Psoas muscle (tissue), 8 donors: ENCODE measurements at regions of chr1 and their contacts with region 1.

Region 1: DNA sequence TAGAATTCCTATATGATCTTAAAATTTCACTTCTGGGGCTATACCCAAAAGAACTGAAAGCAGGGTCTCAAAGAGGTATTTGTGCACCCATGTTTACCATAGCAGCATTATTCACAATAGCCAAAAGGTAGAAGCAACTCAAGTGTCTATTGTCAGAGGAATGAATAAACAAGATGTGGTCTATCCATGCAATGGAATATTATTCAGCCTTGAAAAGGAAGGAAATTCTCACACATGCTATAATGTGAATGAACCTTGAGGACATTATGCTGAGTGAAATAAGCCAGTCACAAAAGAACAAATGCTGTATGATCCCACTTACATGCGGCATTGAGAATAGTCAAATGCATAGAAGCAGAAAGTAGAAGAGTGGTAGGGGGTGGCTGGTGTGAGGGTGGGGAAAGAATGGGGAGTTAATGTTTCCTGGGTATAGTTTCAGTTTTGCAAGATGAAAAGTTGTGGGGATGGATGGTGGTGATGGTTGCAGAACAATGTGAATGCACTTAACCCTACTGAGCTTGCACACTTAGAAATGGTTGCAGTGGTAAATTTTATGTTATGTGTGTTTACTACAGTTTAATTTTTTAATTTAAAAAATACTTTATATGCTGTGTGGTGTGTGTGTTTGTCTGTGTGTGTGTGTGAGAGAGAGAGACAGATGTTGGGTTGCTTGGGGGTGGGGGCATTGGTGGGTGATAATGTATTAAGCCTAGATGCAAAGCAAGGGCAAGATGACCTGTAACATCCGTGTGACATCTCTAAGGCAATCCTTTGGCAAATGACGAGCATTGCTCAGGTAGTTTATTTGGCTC is 122.3 kb downstream of the TOMM20 start:
- DNase-seq: no peak
- ATAC-seq: no peak
- H3K4me3 ChIP-seq: no peak overlapping the region
- H3K27ac ChIP-seq: no peak overlapping the region
- H3K4me1 ChIP-seq: no peaks in the 10 kb centered on the region
- H3K27me3 ChIP-seq: no peaks in the 10 kb centered on the region
- CTCF ChIP-seq: no peak

Region 2: DNA sequence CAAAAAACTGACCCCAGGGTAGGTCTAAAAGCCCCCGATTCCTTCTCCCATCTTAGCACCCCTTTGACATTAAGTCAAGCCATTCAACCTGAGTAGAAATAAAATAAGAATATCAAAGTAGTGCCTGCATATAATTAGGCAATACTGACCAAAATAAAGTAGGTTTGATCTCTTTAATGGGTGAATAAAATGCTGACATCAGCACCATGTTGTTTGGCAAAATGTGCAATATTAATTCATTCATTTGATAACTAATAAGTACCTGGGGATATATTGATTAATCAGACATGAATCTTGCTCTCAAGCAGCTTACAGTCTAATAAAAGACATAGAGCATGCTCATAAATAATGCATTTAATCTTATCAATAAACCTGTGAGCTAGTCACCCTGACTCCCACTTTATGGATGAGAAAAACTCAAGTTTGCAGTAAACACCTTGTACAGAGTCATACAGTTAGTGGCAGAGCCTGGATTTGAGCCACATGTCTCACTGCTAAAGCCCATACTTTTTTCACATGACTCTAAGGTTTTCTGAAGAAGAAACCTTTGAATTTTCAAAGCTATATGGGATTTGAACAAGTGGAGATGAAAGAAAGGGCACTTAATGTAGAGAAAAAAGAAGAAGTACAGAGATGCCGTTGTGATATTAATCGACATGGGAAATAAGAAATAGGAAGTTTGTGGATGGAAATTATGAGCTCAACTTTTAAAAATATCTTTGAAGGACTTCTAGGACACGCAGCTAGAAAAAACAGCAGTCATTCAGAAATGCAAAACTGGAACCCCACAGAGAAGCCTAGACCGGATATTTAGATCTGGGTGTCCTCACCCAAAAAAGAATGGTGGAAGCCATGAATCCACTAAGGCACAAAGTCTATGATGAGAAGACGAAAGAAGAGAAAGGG is 61.6 kb before region 1 on chr1:
- intact Hi-C with region 1: no loop called
- DNase-seq: no peak
- ATAC-seq: no peak
- H3K4me3 ChIP-seq: no peak overlapping the region
- H3K27ac ChIP-seq: no peak overlapping the region
- H3K4me1 ChIP-seq: peaks cover 3% of the 10 kb centered on the region
- H3K27me3 ChIP-seq: no peaks in the 10 kb centered on the region
- CTCF ChIP-seq: no peak

Region 3: DNA sequence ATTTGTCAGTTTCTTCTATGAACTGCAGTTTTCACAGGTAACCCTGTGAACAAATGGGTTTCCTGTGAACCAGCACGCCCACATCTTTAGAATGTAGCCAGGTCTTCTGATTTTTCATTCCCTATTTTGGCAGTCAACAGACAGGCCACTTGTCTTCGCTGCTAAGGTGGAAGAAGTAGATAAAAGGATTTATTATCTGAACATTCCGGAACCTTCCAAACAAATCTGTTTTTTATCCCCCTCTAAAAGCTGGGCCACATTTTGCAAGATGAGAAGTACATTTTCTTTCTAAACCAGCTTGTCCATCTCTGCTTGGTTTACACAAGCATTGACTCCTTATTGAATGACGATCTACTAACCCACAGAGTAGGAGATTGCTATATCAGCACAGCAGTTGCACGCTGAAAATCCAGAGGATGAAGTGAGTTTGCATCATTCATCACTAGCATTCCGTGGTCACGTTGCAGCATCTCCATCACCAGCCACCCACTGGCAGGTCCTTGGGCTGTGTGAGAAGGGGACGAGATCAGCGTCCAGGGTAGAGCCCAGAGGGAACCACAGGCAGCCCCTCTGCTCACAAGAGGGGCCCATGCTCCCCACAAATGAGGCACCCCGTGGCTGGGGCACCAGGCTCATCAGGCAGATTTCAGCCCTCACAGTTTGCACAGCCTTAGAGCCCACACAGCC is 38.8 kb after region 1 on chr1:
- intact Hi-C with region 1: loop called (anchors 5 kb)
- DNase-seq: no peak
- ATAC-seq: no peak
- H3K4me3 ChIP-seq: no peak overlapping the region
- H3K27ac ChIP-seq: no peak overlapping the region
- H3K4me1 ChIP-seq: peaks cover 24% of the 10 kb centered on the region
- H3K27me3 ChIP-seq: no peaks in the 10 kb centered on the region
- CTCF ChIP-seq: no peak

Region 4: DNA sequence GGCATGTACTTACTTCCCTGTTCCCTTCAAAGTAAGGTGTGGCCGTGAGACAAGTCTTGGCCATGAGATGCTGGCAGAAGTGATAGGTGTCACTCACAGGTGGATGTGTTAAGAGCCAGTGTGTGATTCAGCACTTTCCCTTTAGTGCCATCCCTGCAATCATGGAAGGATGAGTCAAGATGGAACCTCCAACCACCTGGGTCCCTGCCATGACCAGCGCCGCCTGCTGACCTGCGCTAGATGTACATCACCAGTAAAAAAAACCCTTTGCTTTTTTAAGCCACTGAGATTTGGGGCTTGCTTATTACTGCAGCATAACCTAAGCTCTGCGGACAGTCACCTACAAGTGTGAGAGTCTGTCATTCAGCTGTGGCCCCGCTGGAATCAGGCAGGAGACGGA is 50.6 kb after region 1 on chr1:
- intact Hi-C with region 1: loop called in 1 of 2 experiments (anchors 5 kb)
- DNase-seq: no peak
- ATAC-seq: peak; percentile 15 to 87 (median 51)
- H3K4me3 ChIP-seq: no peak overlapping the region
- H3K27ac ChIP-seq: no peak overlapping the region
- H3K4me1 ChIP-seq: peaks cover 8% of the 10 kb centered on the region
- H3K27me3 ChIP-seq: no peaks in the 10 kb centered on the region
- CTCF ChIP-seq: no peak

Region 5: GRCh38 chr1:235105051-235106043 is 99.0 kb after region 1 on chr1:
- intact Hi-C with region 1: no loop called
- DNase-seq: no peak
- ATAC-seq: peak in 1 of 4 donors; percentile 3
- H3K4me3 ChIP-seq: no peak overlapping the region
- H3K27ac ChIP-seq: no peak overlapping the region
- H3K4me1 ChIP-seq: peaks cover 3% of the 10 kb centered on the region
- H3K27me3 ChIP-seq: no peaks in the 10 kb centered on the region
- CTCF ChIP-seq: no peak

Region 6: GRCh38 chr1:235246022-235246991 is 240.0 kb after region 1 on chr1:
- intact Hi-C with region 1: no loop called
- DNase-seq: no peak
- ATAC-seq: no peak
- H3K4me3 ChIP-seq: no peak overlapping the region
- H3K27ac ChIP-seq: no peak overlapping the region
- H3K4me1 ChIP-seq: peaks cover 2% of the 10 kb centered on the region
- H3K27me3 ChIP-seq: no peaks in the 10 kb centered on the region
- CTCF ChIP-seq: no peak